ENCODE measurements at regions of chr2 and their contacts with region 1.

Region 1: DNA sequence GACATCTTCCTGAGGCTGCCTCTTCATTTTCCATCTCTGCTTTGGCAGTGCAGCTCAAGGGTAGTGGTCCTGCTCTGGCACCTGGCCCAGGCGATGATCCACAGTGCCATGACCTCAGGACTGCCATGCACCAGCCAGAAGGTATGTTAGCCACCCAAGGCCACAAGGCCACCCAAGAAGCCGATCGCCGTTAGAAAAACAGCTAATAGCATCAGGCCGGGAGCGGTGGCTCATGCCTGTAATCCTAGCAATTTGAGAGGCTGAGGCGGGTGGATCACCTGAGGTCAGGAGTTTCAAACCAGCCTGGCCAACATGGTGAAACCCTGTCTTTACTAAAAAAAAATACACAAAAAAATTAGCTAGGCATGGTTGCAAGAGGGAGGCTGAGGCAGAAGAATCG is 28.4 kb upstream of the UGGT1 start:
- DNase-seq: no peak
- ATAC-seq: no peak
- H3K4me3 Mint-ChIP-seq: no peak overlapping the region
- H3K27ac Mint-ChIP-seq: no peak overlapping the region
- H3K4me1 Mint-ChIP-seq: no peaks in the 10 kb centered on the region
- H3K27me3 Mint-ChIP-seq: no peaks in the 10 kb centered on the region; the same call in 1 of the 2 replicates
- CTCF ChIP-seq: no peak

Region 2: GRCh38 chr2:128073278-128073677 is 10.7 kb after region 1 on chr2:
- CTCF ChIA-PET with region 1: interaction called, 10 read pairs
- POLR2A ChIA-PET with region 1: no interaction called
- DNase-seq: no peak
- ATAC-seq: no peak
- H3K4me3 Mint-ChIP-seq: no peak overlapping the region
- H3K27ac Mint-ChIP-seq: no peak overlapping the region
- H3K4me1 Mint-ChIP-seq: no peaks in the 10 kb centered on the region
- H3K27me3 Mint-ChIP-seq: no peaks in the 10 kb centered on the region; the same call in 1 of the 2 replicates
- CTCF ChIP-seq: no peak

Region 3: GRCh38 chr2:128090945-128091725 is 28.6 kb after region 1 on chr2 and contains the start of gene UGGT1:
- CTCF ChIA-PET with region 1: interaction called, 45 read pairs
- POLR2A ChIA-PET with region 1: no interaction called
- DNase-seq: peak; percentile 93
- ATAC-seq: peak; percentile 97
- H3K4me3 Mint-ChIP-seq: peak within 1 kb of the TSS; percentile 92
- H3K27ac Mint-ChIP-seq: peak within 1 kb of the TSS; percentile 96
- H3K4me1 Mint-ChIP-seq: peaks cover 16% of the 10 kb centered on the region
- H3K27me3 Mint-ChIP-seq: no peaks in the 10 kb centered on the region
- CTCF ChIP-seq: no peak
- total RNA-seq, gene UGGT1: 43.3 to 57.9 TPM (median 50.1 TPM) in 3 replicates

Region 4: GRCh38 chr2:128166746-128167353 is 104.3 kb after region 1 on chr2:
- CTCF ChIA-PET with region 1: no interaction called
- POLR2A ChIA-PET with region 1: no interaction called
- DNase-seq: no peak
- ATAC-seq: no peak
- H3K4me3 Mint-ChIP-seq: no peak overlapping the region
- H3K27ac Mint-ChIP-seq: no peak overlapping the region
- H3K4me1 Mint-ChIP-seq: peaks cover 11% of the 10 kb centered on the region
- H3K27me3 Mint-ChIP-seq: no peaks in the 10 kb centered on the region
- CTCF ChIP-seq: no peak

Region 5: GRCh38 chr2:128342550-128342949 is 280.0 kb after region 1 on chr2:
- CTCF ChIA-PET with region 1: no interaction called
- POLR2A ChIA-PET with region 1: no interaction called
- DNase-seq: no peak
- ATAC-seq: no peak
- H3K4me3 Mint-ChIP-seq: no peak overlapping the region
- H3K27ac Mint-ChIP-seq: no peak overlapping the region
- H3K4me1 Mint-ChIP-seq: peaks cover under 1% of the 10 kb centered on the region
- H3K27me3 Mint-ChIP-seq: no peaks in the 10 kb centered on the region; the same call in 1 of the 2 replicates
- CTCF ChIP-seq: no peak

Measured in WTC11 (cell line).